PC-9 (cell line): ENCODE measurements at regions of chr7 and their contacts with region 1.

Region 1: GRCh38 chr7:112080441-112080840 is 125.8 kb downstream of the DOCK4 start:
- DNase-seq: peak; percentile 35 to 45
- H3K4me3 ChIP-seq: no peak overlapping the region
- H3K27ac ChIP-seq: no peak overlapping the region
- H3K4me1 ChIP-seq: no peaks in the 10 kb centered on the region
- H3K27me3 ChIP-seq: no peaks in the 10 kb centered on the region
- CTCF ChIP-seq: no peak

Region 2: DNA sequence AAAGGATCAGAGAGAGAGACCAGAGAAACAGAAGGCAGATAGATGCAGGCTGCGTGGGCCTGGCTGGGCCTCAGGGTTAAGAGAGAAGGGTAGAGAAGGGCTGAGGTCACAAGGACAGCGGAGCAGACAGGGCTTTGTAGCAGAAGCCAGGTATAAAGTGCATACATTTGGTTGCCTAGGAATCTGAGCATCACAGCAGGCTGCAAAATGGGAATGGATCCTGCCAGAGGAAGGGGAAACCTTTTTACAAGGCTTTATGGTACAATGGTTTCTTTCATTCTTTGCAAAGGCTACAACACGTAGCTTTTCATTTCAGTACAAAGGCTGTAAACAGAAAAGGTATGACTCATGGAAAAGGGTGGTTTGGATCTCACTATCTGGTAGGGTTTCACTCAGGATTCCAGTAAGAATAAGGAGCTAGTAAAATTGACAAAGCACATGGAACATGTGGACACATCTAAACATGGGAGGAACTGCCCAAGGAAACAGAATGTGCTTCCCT is 149.4 kb before region 1 on chr7:
- CTCF ChIA-PET with region 1: no interaction called
- POLR2A ChIA-PET with region 1: no interaction called
- intact Hi-C with region 1: no loop called
- DNase-seq: no peak
- H3K4me3 ChIP-seq: no peak overlapping the region
- H3K27ac ChIP-seq: no peak overlapping the region
- H3K4me1 ChIP-seq: no peaks in the 10 kb centered on the region
- H3K27me3 ChIP-seq: no peaks in the 10 kb centered on the region
- CTCF ChIP-seq: no peak

Region 3: DNA sequence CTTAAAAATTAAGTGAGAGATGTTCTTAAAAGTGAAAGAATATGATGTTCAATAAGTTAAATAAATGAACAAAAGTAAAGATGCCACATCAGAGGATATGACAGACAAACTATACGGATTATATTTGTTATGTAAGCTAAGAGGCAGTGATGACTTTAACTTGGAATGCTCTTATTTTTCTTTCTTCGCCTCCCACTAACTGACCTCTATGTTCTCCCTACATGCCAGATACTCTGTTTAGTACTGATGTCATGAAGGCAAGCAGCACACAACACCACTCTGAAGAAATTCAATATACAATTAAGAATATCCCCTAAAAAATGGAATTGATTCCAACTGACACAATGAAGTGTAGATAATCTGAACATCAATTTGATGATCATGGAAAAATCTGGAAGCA is 97.6 kb before region 1 on chr7:
- CTCF ChIA-PET with region 1: no interaction called
- POLR2A ChIA-PET with region 1: no interaction called
- intact Hi-C with region 1: loop called (anchors 2 kb)
- DNase-seq: no peak
- H3K4me3 ChIP-seq: no peak overlapping the region
- H3K27ac ChIP-seq: no peak overlapping the region
- H3K4me1 ChIP-seq: peaks cover 27% of the 10 kb centered on the region
- H3K27me3 ChIP-seq: no peaks in the 10 kb centered on the region
- CTCF ChIP-seq: no peak

Region 4: GRCh38 chr7:112010994-112011393 is 69.4 kb before region 1 on chr7:
- CTCF ChIA-PET with region 1: no interaction called
- POLR2A ChIA-PET with region 1: no interaction called
- intact Hi-C with region 1: no loop called
- DNase-seq: no peak
- H3K4me3 ChIP-seq: no peak overlapping the region
- H3K27ac ChIP-seq: no peak overlapping the region
- H3K4me1 ChIP-seq: peaks cover 11% of the 10 kb centered on the region
- H3K27me3 ChIP-seq: no peaks in the 10 kb centered on the region
- CTCF ChIP-seq: no peak

Region 5: DNA sequence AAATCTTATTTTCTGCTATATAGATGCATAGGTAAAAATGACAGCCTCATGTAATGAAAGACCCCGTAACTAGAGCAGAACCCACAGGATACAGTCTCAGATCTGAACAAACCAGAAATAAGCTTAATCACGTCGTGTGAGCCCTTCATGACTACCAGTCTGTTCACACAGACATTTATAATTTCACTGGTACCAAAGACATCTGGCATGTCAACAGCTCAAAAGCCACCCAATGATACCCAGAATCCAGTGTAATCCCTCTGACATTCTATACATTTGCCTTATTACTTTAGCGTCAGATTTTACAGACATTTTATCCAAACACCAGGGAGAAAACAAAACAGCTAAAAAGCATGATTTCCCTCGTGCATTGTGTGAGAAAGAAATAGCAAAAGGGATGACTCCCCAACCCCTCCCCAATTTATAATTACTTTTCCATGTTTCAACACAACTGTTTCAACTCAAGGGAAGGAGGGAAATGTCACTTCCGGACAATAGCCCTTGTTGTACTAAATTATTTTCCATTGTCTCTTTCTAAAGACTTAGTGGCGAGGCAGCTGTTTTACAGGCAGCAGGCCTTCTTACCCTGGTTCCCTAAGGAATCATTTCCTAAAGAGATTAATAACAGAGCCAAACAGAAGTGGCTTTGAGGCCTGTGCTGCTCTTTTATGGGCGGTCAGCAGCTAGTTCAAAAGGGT is 92.6 kb after region 1 on chr7:
- CTCF ChIA-PET with region 1: no interaction called
- POLR2A ChIA-PET with region 1: no interaction called
- intact Hi-C with region 1: no loop called
- DNase-seq: no peak
- H3K4me3 ChIP-seq: no peak overlapping the region
- H3K27ac ChIP-seq: no peak overlapping the region
- H3K4me1 ChIP-seq: no peaks in the 10 kb centered on the region
- H3K27me3 ChIP-seq: no peaks in the 10 kb centered on the region
- CTCF ChIP-seq: no peak

Region 6: DNA sequence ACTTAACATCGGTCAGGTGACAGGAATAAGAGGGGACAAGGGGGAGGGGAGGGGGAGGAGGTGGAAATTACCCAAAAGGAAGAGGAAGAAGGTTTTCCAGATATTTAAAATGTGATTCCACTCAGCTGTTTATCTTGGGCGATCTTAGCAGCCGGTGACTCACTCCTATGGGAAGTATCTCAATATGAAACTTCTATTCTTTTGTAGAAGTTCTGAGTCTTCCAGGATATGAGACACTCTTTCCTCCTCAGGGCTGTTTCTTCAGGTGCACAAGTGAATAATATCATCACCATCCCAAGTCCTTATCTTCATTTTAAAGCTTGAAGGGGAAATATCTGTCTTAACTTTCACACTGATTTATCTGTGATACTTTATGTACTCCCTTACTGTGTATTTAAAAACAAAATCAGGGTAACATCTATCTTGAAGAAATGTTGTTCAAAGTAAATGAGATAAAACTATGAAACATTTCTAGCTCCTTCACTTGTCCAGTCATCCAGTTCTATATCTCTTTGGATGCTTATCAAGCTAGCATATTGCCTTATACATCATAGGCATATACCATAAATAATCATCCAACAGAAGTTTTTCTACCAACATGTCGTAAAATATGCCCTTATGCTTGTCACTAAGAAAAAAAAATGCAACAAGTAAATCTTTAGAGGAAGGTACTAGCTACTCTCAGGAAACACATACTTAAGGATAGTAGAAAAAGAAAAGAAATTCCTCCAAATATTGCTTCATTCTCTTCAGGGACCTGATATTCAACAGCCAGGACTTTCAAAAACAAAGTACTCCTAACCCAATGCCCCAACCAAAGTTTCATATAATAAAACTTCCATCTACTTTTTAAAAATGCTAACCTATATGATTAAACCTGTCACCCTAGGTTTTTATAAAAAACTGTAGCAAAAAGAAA is 112.1 kb after region 1 on chr7:
- CTCF ChIA-PET with region 1: no interaction called
- POLR2A ChIA-PET with region 1: no interaction called
- intact Hi-C with region 1: loop called (anchors 5 kb)
- DNase-seq: peak in 1 of 2 experiments; percentile 73
- H3K4me3 ChIP-seq: no peak overlapping the region
- H3K27ac ChIP-seq: peak overlapping the region; percentile 48
- H3K4me1 ChIP-seq: peaks cover 11% of the 10 kb centered on the region
- H3K27me3 ChIP-seq: no peaks in the 10 kb centered on the region
- CTCF ChIP-seq: no peak